PC-9 (cell line): ENCODE measurements at regions of chr7 and their contacts with region 1.

Region 1: GRCh38 chr7:53947732-53948131 is 594.4 kb upstream of the VSTM2A start:
- DNase-seq: no peak
- H3K4me3 ChIP-seq: no peak overlapping the region
- H3K27ac ChIP-seq: no peak overlapping the region
- H3K4me1 ChIP-seq: no peaks in the 10 kb centered on the region
- H3K27me3 ChIP-seq: no peaks in the 10 kb centered on the region
- CTCF ChIP-seq: no peak

Region 2: DNA sequence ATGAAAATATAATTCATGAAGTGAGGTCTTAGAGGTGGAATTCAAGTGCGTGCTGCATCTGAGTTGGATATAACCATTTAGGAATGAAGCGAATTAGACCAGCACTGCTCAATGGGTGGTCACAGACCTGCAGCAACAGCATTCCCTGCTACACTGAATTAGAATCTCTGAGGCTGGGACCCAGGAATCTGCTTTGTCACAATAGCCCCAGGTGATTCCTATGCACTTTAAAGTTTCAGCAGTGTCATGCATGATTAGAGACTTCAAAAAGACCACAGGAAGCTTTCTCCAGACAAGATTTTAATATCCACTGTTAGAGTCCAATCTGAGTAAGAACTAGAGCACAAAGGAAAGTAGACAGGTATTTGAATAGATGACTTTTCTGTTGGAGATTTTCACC is 241.6 kb after region 1 on chr7:
- CTCF ChIA-PET with region 1: no interaction called
- POLR2A ChIA-PET with region 1: interaction called, 11 read pairs
- intact Hi-C with region 1: no loop called
- DNase-seq: no peak
- H3K4me3 ChIP-seq: no peak overlapping the region
- H3K27ac ChIP-seq: no peak overlapping the region
- H3K4me1 ChIP-seq: no peaks in the 10 kb centered on the region
- H3K27me3 ChIP-seq: no peaks in the 10 kb centered on the region
- CTCF ChIP-seq: no peak

Region 3: DNA sequence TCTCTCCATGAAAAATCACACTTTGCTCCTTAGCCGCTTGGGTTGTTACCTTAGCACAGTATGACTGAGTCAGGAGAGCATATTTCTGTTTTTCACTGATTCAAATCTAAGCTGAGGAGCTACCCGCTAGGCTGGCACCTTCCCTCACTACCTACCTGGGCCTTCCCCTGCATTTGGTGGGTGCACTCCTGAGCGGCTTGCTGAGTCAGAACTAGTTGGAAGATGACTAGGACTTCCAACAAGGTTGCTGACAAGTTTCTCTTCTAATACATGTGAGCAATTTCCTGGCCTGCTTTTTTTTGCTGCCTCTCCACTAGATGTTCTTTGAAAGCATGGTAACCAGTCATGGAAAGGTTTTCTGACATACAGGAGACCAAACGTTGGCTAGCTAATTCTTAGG is 855.1 kb after region 1 on chr7:
- CTCF ChIA-PET with region 1: no interaction called
- POLR2A ChIA-PET with region 1: no interaction called
- intact Hi-C with region 1: no loop called
- DNase-seq: peak in 1 of 2 experiments; percentile 19
- H3K4me3 ChIP-seq: no peak overlapping the region
- H3K27ac ChIP-seq: no peak overlapping the region
- H3K4me1 ChIP-seq: peaks cover 6% of the 10 kb centered on the region
- H3K27me3 ChIP-seq: no peaks in the 10 kb centered on the region
- CTCF ChIP-seq: no peak